ENCODE measurements at regions of chr2 and their contacts with region 1.

Region 1: GRCh38 chr2:239934571-239935171 is 90.5 kb downstream of the NDUFA10 start:
- DNase-seq: peak; percentile 82
- H3K4me3 Mint-ChIP-seq: no peak overlapping the region
- H3K27ac Mint-ChIP-seq: no peak overlapping the region
- H3K4me1 Mint-ChIP-seq: peaks cover 4% of the 10 kb centered on the region
- H3K27me3 Mint-ChIP-seq: peaks cover 2% of the 10 kb centered on the region

Region 2: GRCh38 chr2:239716536-239717318 is 217.9 kb before region 1 on chr2:
- CTCF ChIA-PET with region 1: no interaction called
- intact Hi-C with region 1: no loop called
- DNase-seq: no peak
- H3K4me3 Mint-ChIP-seq: no peak overlapping the region
- H3K27ac Mint-ChIP-seq: no peak overlapping the region
- H3K4me1 Mint-ChIP-seq: no peaks in the 10 kb centered on the region
- H3K27me3 Mint-ChIP-seq: peaks cover 3% of the 10 kb centered on the region

Region 3: DNA sequence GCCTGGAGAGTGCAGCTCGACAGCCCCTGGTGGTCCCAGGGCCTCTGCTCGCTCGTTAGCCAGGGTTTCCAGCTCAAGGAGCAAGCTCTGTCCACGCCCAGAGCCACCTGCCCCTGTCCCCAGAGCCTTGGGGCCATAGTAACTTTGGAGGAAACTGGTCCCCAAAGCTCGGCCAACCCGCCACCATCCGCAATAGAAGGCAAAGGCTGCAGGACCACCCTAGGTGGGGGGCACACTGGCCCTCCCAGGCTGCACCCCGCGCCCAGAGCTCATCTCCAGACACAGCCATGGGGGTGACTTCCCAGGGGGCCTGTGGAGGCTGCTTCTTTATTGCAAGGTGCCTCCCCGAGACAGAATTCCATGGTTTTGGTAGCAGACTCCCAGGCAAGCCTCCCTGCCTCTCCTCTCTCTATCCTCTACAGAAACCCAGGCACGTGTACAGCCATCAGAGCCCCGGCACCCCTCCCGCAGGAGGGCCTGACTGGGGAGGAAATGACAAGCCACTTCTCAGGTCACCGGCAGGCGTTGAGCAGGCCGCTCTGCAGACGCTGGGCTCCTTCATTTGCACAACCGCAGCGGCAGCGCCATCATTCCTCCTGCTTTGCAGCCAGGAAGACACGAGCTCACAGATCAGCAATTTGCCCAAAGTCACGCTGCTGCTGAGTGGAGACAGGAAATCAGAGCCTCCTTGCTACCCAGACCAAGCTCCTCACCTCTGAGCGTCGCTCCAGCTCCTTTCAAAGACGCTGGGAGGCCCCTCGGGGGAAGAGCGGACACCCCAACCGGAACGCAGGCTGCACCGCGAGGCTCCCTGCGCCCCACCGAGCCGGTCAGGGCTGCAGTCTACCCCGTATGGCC is 10.3 kb after region 1 on chr2:
- CTCF ChIA-PET with region 1: interaction called, 21 read pairs
- intact Hi-C with region 1: no loop called
- DNase-seq: peak; percentile 62
- H3K4me3 Mint-ChIP-seq: no peak overlapping the region
- H3K27ac Mint-ChIP-seq: peak overlapping the region; percentile 31
- H3K4me1 Mint-ChIP-seq: peaks cover 9% of the 10 kb centered on the region
- H3K27me3 Mint-ChIP-seq: no peaks in the 10 kb centered on the region

Region 4: DNA sequence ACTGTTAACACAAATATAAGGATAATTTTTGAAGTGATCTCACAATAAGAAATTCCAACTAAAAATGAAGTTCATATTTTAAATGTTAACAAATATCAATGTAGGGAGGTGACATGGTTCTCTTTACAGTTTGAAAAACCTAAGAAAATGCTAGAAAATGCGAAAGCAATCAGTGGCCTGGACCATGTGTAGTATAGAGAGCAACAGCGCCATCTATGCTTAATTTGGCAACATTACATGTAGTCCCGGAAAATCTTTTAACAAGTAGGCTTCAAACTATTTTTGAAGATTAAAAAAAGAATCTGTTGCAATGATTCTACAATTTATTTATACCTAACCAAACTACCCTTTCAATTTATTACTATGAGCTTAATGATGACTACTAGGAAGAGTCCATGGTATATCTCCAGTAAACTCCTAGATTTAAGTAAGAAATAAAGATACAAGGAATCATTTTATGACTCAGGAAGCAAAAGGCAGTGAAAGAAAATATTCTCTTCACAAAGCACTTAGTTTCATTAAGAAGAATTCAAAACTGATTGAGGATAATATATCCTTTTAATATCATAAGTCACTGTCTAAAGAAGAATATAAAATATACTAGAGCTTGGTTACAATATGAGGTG is 57.1 kb after region 1 on chr2:
- CTCF ChIA-PET with region 1: no interaction called
- intact Hi-C with region 1: loop called (anchors 1 kb)
- DNase-seq: peak; percentile 22
- H3K4me3 Mint-ChIP-seq: no peak overlapping the region
- H3K27ac Mint-ChIP-seq: no peak overlapping the region
- H3K4me1 Mint-ChIP-seq: no peaks in the 10 kb centered on the region
- H3K27me3 Mint-ChIP-seq: no peaks in the 10 kb centered on the region

Region 5: GRCh38 chr2:240021488-240022104 is 86.9 kb after region 1 on chr2:
- CTCF ChIA-PET with region 1: interaction called, 4 read pairs
- intact Hi-C with region 1: loop called (anchors 2 kb)
- DNase-seq: peak; percentile 79
- H3K4me3 Mint-ChIP-seq: no peak overlapping the region
- H3K27ac Mint-ChIP-seq: no peak overlapping the region
- H3K4me1 Mint-ChIP-seq: peaks cover 23% of the 10 kb centered on the region
- H3K27me3 Mint-ChIP-seq: no peaks in the 10 kb centered on the region

Region 6: GRCh38 chr2:240136013-240136670 is 201.5 kb after region 1 on chr2 and contains the start of gene COPS9:
- CTCF ChIA-PET with region 1: no interaction called
- intact Hi-C with region 1: loop called (anchors 2 kb)
- DNase-seq: peak; percentile 87
- H3K4me3 Mint-ChIP-seq: peak within 1 kb of the TSS; percentile 90
- H3K27ac Mint-ChIP-seq: peak within 1 kb of the TSS; percentile 74
- H3K4me1 Mint-ChIP-seq: peaks cover 25% of the 10 kb centered on the region
- H3K27me3 Mint-ChIP-seq: no peaks in the 10 kb centered on the region
- total RNA-seq, gene COPS9: 84.5 to 91.3 TPM